ENCODE measurements at regions of chr2 and their contacts with region 1.

Region 1: GRCh38 chr2:96835830-96836229 is 8.0 kb downstream of the ANKRD23 start:
- DNase-seq: no peak
- ATAC-seq: no peak
- H3K4me3 ChIP-seq: no peak overlapping the region
- H3K27ac ChIP-seq: no peak overlapping the region
- H3K4me1 ChIP-seq: no peaks in the 10 kb centered on the region
- H3K27me3 ChIP-seq: no peaks in the 10 kb centered on the region
- CTCF ChIP-seq: no peak

Region 2: GRCh38 chr2:96359310-96359709 is 476.5 kb before region 1 on chr2:
- CTCF ChIA-PET with region 1: no interaction called
- POLR2A ChIA-PET with region 1: no interaction called
- in situ Hi-C with region 1: no loop called
- intact Hi-C with region 1: no loop called
- DNase-seq: no peak
- ATAC-seq: peak; percentile 60; the same call in 1 of the 2 replicates
- H3K4me3 ChIP-seq: no peak overlapping the region
- H3K27ac ChIP-seq: no peak overlapping the region
- H3K4me1 ChIP-seq: no peaks in the 10 kb centered on the region
- H3K27me3 ChIP-seq: no peaks in the 10 kb centered on the region
- CTCF ChIP-seq: peak; percentile 70

Region 3: DNA sequence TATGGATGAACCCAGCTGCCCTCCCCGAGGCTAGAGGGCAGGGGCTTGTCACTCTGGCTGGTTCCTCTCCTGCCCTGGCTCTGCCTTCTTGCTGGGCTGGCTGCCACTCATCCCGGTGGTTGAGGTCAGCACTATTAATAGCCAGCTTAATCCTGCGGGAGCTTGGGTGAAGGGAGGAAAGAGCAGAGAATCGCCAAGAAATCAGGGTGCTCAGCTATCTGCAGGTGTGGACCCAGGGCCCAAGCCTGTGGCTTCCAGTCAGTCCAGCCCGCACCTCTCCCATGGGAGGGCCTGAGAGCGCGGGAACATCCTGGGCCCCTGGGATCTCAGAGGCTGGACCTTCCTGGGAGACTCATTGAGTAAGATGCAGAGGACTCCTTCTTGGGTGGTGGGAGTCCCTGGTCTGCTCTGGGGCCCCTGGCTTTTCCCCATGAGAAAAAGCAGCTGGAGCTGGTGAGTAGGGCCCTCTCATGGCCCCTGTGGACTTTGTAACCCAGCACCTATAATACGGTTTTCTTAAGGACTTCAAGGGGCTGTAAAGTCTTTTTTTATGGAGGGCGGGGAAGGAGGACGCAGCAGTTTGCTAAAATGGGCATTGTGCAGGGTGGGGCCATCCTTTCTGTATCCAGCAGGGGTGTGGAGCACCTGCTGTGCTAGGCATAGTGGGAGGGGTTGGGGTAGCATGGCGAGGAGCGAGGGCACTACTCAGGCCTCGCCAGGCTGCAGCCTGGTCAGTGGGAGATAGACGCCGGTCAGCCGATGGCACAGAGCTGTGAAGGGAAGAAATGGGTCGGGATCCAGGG is 47.2 kb before region 1 on chr2:
- CTCF ChIA-PET with region 1: no interaction called
- POLR2A ChIA-PET with region 1: interaction called, 16 read pairs
- in situ Hi-C with region 1: no loop called
- intact Hi-C with region 1: no loop called
- DNase-seq: no peak
- ATAC-seq: peak; percentile 56
- H3K4me3 ChIP-seq: no peak overlapping the region
- H3K27ac ChIP-seq: peak overlapping the region; percentile 7; the same call in 1 of the 2 replicates
- H3K4me1 ChIP-seq: peaks cover 29% of the 10 kb centered on the region
- H3K27me3 ChIP-seq: no peaks in the 10 kb centered on the region
- CTCF ChIP-seq: no peak

Measured in Panc1 (cell line).